MCF 10A (cell line): ENCODE measurements at regions of chr12 and their contacts with region 1.

Region 1: DNA sequence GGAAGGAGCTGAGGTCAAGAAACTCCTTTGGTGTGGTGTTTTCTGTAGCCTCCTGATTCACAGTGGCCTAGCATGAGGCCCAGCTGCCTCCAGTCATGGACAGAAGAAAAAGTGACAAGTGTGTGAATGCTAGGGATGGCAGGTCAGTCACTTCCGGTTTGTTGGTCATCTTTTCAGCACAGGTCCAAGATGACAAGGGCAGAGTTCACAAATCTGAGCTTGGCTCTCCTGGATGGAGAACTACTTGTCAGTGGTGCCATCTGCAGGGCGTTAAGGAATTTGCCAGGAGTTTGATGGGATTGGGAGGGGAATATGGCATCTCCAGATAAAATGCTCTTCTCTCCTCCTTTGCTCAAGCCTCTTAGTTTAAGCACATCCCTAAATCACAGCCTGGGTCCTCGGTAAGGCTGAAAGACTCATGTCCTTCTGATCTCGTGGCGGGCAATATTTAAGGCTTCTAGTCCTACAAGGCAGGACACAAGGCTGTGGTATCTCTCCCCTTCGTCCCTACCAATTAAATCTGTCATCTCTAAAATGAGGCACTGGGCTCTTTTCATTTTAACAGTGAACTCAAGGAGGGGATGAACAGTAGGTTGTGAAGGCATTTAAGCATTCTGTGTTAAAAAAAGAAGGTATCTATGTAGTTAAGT is 10.0 kb downstream of the TUBA1B start:
- DNase-seq: peak; percentile 78
- H3K4me3 Mint-ChIP-seq: no peak overlapping the region
- H3K27ac Mint-ChIP-seq: no peak overlapping the region
- H3K4me1 Mint-ChIP-seq: no peaks in the 10 kb centered on the region
- H3K27me3 Mint-ChIP-seq: no peaks in the 10 kb centered on the region
- CTCF ChIP-seq: peak; percentile 57

Region 2: GRCh38 chr12:48865434-48866290 is 255.5 kb before region 1 on chr12 and contains the start of gene RND1:
- CTCF ChIA-PET with region 1: no interaction called
- POLR2A ChIA-PET with region 1: no interaction called
- intact Hi-C with region 1: no loop called
- DNase-seq: peak; percentile 95
- H3K4me3 Mint-ChIP-seq: peak within 1 kb of the TSS; percentile 81
- H3K27ac Mint-ChIP-seq: peak within 1 kb of the TSS; percentile 71
- H3K4me1 Mint-ChIP-seq: peaks cover 16% of the 10 kb centered on the region
- H3K27me3 Mint-ChIP-seq: no peaks in the 10 kb centered on the region
- CTCF ChIP-seq: no peak
- total RNA-seq, gene RND1: 1.0 and 1.2 TPM in 2 replicates

Region 3: GRCh38 chr12:49098035-49098451 is 23.1 kb before region 1 on chr12:
- CTCF ChIA-PET with region 1: interaction called, 28 read pairs
- POLR2A ChIA-PET with region 1: interaction called, 6 read pairs
- intact Hi-C with region 1: no loop called
- DNase-seq: peak; percentile 61
- H3K4me3 Mint-ChIP-seq: no peak overlapping the region
- H3K27ac Mint-ChIP-seq: no peak overlapping the region
- H3K4me1 Mint-ChIP-seq: peaks cover 5% of the 10 kb centered on the region
- H3K27me3 Mint-ChIP-seq: no peaks in the 10 kb centered on the region
- CTCF ChIP-seq: peak; percentile 51

Region 4: DNA sequence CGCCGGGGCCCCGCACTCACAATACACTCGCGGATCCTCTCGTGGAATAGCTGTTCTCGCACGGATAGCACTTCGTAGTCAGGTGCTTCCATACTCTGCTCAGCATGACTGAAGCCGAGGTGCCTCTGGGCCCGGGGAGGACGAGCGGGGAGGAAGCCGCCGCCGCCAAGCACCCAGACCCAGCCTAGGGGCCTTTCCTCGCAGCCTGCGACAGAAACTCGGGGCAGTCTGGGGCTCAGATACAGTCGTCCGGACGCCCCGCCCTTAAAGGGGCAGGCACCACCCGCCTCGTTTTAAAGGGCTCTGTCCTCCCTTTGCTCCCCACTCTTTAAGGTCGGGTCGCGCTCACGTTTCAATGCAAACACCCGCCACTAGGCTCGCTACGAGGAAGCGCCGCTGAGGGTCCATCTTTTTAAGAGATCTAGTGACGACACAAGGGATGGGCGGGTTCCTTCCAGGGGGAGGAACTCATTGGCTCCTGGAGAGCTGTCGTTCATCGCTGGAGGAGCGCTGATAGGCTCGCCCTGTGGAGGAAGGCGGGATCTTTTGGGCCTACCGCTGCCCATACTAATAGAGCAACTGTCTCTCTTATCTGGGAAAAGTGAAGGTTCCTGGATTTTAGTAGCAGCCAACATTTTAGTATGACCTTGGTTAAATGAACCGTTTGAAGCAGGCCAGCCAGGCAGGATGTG is 10.6 kb before region 1 on chr12 and contains the start of gene LMBR1L:
- CTCF ChIA-PET with region 1: interaction called, 19 read pairs
- POLR2A ChIA-PET with region 1: interaction called, 14 read pairs
- intact Hi-C with region 1: no loop called
- DNase-seq: peak; percentile 99
- H3K4me3 Mint-ChIP-seq: peak within 1 kb of the TSS; percentile 86
- H3K27ac Mint-ChIP-seq: peak within 1 kb of the TSS; percentile 97
- H3K4me1 Mint-ChIP-seq: peaks cover 18% of the 10 kb centered on the region
- H3K27me3 Mint-ChIP-seq: no peaks in the 10 kb centered on the region
- CTCF ChIP-seq: peak; percentile 14
- total RNA-seq, gene LMBR1L: 27.8 and 35.7 TPM in 2 replicates

Region 5: GRCh38 chr12:49198431-49199155 is 77.4 kb after region 1 on chr12:
- CTCF ChIA-PET with region 1: no interaction called
- POLR2A ChIA-PET with region 1: no interaction called
- intact Hi-C with region 1: no loop called
- DNase-seq: peak; percentile 66
- H3K4me3 Mint-ChIP-seq: no peak overlapping the region
- H3K27ac Mint-ChIP-seq: no peak overlapping the region
- H3K4me1 Mint-ChIP-seq: peaks cover 16% of the 10 kb centered on the region
- H3K27me3 Mint-ChIP-seq: peaks cover 1% of the 10 kb centered on the region
- CTCF ChIP-seq: no peak

Region 6: GRCh38 chr12:49288412-49288853 is 167.3 kb after region 1 on chr12:
- CTCF ChIA-PET with region 1: no interaction called
- POLR2A ChIA-PET with region 1: no interaction called
- intact Hi-C with region 1: no loop called
- DNase-seq: peak; percentile 70
- H3K4me3 Mint-ChIP-seq: no peak overlapping the region
- H3K27ac Mint-ChIP-seq: no peak overlapping the region
- H3K4me1 Mint-ChIP-seq: peaks cover 4% of the 10 kb centered on the region
- H3K27me3 Mint-ChIP-seq: no peaks in the 10 kb centered on the region
- CTCF ChIP-seq: peak; percentile 77